ENCODE measurements at regions of chr1 and their contacts with region 1.

Region 1: GRCh38 chr1:3618881-3619671 is 5.7 kb upstream of the TPRG1L start:
- DNase-seq: peak in 3 of 4 donors; percentile 69 to 88 (median 73)
- ATAC-seq: peak; percentile 88
- H3K4me3 ChIP-seq: no peak overlapping the region
- H3K27ac ChIP-seq: no peak overlapping the region
- H3K4me1 ChIP-seq: peaks cover 10 to 52% of the 10 kb centered on the region in 2 donors
- H3K27me3 ChIP-seq: no peaks in the 10 kb centered on the region
- CTCF ChIP-seq: peak; percentile 82 to 93

Region 2: DNA sequence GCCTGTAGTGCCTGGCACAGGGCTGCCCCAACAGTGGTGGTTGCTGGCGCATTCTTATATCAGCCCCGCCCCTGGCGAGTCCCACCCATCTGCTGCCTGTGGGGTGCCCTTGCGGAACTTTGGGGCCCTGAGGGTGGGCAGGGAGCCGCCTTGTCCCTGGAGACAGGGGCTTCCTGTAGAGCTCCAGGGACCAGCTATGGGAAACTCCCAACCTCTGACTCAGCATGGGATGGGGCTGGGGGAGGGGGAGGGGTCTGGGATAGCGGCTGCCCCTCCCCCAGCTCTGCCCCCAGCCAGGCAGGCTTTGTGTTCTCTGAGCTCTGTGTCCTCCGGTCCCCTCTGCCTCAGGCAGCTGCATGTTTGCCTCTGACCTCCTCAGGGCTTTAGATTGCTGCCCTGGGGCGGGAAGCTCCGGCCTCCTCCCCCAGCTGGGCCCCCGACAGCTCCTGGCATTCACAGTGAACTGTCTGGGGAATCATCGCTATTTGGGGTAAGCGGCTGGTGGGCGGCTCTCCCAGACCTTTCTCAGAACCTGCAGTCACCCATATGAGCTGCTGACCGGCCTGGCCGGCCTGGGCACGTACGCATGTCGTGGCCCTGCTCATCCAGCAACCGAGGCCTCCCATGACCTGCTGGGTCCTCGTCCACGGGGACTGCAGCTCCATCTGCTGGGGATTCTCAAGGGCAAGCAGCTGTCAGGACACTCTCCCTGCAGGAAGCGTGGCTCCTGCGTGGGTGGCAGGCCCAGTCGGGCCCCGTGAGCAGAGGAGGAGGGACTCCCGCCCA is 147.6 kb before region 1 on chr1:
- intact Hi-C with region 1: no loop called
- DNase-seq: peak in 2 of 4 donors; percentile 53 to 67
- ATAC-seq: peak; percentile 7
- H3K4me3 ChIP-seq: no peak overlapping the region
- H3K27ac ChIP-seq: no peak overlapping the region
- H3K4me1 ChIP-seq: peaks cover 0 to 4% of the 10 kb centered on the region in 2 donors
- H3K27me3 ChIP-seq: no peaks in the 10 kb centered on the region
- CTCF ChIP-seq: no peak

Region 3: DNA sequence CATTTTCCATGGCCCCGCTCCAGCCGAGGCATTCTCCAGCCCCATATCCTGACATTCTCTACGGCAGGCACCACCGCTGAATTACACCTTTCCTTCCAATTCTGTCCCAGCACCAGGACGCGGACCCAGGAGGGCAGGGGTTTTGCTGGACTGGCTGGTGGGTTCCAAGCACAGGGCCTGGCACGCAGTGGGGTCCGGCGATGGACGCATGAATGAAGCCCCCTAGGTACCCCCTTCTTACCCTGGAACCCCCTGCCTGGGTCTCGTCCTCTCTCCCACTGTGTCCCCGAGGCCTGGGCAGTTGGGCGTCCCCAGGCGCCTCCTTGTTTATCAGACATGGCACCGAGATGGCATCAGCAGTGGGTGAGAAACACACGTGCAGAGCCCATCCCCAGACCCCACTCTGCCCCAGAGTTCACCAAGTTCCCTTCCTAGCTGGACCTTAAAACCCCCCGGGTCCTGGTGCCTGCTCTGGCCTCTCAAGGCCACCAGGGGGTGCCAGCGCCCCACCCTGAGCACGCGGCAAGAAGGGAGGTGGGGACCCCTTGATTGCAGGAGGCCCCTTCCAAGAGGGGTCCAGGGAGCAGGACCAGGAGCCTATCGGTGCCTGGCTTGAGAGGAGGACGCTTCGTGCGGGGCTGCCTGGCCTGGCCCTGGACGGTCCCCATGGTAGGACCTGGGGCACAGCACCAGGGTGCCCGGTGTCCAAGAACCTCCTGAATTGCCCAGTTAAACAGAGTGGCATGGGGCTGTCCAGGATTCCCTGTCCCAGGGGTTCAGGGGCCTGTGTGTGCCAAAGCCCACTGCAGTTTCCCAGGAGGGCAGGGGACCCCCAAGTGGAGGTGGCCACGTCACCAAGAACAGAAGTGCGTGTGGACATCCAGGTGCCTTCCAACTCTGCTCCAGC is 53.9 kb before region 1 on chr1:
- intact Hi-C with region 1: loop called in 1 of 2 experiments (anchors 5 kb)
- DNase-seq: peak in 1 of 4 donors; percentile 48
- ATAC-seq: peak; percentile 22
- H3K4me3 ChIP-seq: no peak overlapping the region
- H3K27ac ChIP-seq: no peak overlapping the region
- H3K4me1 ChIP-seq: no peaks in the 10 kb centered on the region
- H3K27me3 ChIP-seq: no peaks in the 10 kb centered on the region
- CTCF ChIP-seq: peak; percentile 62 to 80

Region 4: DNA sequence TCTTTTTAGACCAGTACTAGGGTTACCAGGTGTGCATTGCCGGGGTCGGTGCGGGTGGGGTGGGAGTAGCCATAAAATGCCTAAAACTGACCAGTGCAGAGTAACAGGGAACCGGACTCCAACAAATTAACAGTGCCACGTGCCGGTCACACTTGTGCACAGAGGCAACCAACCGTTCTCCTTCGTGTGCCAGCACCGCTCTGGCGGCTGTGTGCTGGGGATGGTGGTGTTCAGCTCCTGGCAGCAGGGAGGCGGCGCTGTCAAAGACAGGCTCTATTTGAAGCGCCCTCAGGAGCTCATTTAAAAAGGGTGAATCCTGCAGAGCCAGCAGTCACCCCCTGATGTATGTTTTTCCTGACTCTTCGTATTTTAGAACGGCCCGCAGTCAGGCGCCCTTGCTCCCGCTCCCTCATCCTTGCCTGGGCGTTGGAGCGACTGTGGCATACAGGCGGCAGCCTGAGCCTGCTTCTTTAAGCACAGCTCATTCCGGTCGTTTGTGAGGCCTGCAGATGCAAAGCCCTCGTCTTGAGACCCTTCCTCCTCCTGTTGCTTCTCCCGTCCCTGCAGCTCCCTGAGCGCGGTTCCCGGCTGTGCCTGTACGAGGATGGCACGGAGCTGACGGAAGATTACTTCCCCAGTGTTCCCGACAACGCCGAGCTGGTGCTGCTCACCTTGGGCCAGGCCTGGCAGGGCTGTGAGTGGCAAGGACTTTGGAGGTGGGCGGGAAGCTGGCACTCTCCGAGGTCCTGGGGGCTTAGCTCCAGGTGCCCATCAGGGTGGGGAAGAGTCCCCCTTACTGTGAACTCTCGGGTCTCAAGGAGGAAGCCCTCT is 239.3 kb after region 1 on chr1:
- intact Hi-C with region 1: no loop called
- DNase-seq: peak in 3 of 4 donors; percentile 22 to 78 (median 41)
- ATAC-seq: peak; percentile 18
- H3K4me3 ChIP-seq: peak overlapping the region; percentile 95
- H3K27ac ChIP-seq: peak overlapping the region in 1 of 2 donors; percentile 89
- H3K4me1 ChIP-seq: peaks cover 17 to 31% of the 10 kb centered on the region in 2 donors
- H3K27me3 ChIP-seq: no peaks in the 10 kb centered on the region
- CTCF ChIP-seq: no peak